Heart right ventricle (tissue), 16 donors: ENCODE measurements at regions of chr1 and their contacts with region 1.

Region 1: GRCh38 chr1:2133039-2133878 is 61.3 kb downstream of the FAAP20 start:
- DNase-seq: peak; percentile 98 to 99
- ATAC-seq: peak; percentile 92 to 95 (median 94)
- H3K4me3 ChIP-seq: peak overlapping the region in 9 of 10 donors; percentile 21 to 60 (median 46)
- H3K27ac ChIP-seq: peak overlapping the region; percentile 52 to 96 (median 88)
- H3K4me1 ChIP-seq: peaks cover 8 to 44% (median 25%) of the 10 kb centered on the region in 9 donors
- H3K27me3 ChIP-seq: no peaks in the 10 kb centered on the region
- CTCF ChIP-seq: no peak

Region 2: GRCh38 chr1:2174348-2175054 is 41.2 kb after region 1 on chr1:
- intact Hi-C with region 1: loop called in 5 of 10 experiments (anchors 1 to 5 kb)
- DNase-seq: peak in 1 of 2 donors; percentile 65
- ATAC-seq: peak; percentile 68 to 87 (median 76)
- H3K4me3 ChIP-seq: peak overlapping the region in 9 of 10 donors; percentile 25 to 57 (median 44)
- H3K27ac ChIP-seq: peak overlapping the region in 2 of 10 donors; percentile 26 to 36
- H3K4me1 ChIP-seq: peaks cover 0 to 14% (median 5%) of the 10 kb centered on the region in 9 donors
- H3K27me3 ChIP-seq: no peaks in the 10 kb centered on the region
- CTCF ChIP-seq: peak; percentile 67 to 95 (median 91)

Region 3: GRCh38 chr1:2189459-2190425 is 56.5 kb after region 1 on chr1:
- intact Hi-C with region 1: loop called in 1 of 10 experiments (anchors 10 kb)
- DNase-seq: peak; percentile 95 to 97
- ATAC-seq: peak; percentile 86 to 95 (median 94)
- H3K4me3 ChIP-seq: peak overlapping the region; percentile 22 to 74 (median 62)
- H3K27ac ChIP-seq: peak overlapping the region; percentile 90 to 99 (median 94)
- H3K4me1 ChIP-seq: peaks cover 19 to 51% (median 41%) of the 10 kb centered on the region in 9 donors
- H3K27me3 ChIP-seq: no peaks in the 10 kb centered on the region
- CTCF ChIP-seq: peak in 1 of 9 donors; percentile 9

Region 4: DNA sequence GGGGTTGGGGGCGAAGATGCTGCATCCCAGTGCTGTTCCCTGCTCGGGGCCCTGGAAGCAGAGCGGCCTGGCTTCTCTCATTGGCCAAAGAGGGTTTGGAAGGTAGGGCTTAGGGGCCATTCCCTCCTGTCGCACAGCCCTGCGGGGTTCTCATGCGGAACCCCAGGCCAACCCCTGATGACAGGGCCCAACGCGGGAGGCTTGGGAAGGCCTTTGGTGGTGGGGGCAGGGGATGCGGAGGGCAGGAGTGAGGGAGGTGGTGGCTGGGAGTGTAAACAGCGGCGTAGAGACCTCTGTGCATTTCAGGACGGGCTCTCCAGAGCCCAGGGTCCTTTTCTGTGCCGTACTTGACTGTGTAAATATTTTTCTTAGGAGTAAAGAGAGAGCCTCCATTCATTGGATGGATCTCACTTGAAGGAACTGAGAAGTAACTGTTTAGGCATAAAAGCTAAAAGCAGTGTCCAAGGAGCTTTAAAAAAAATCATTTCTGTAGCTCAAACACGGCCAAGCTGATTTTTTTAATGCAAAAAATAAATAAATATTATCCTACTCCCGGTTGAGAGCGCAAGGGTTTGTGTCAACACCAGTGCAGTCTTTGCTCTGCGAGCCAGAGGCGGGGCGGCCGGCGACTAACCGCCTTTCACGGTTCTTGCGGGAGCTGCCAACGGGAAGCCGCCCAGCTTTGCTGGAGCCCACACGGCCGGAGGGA is 1104.9 kb after region 1 on chr1:
- intact Hi-C with region 1: no loop called
- DNase-seq: no peak
- ATAC-seq: no peak
- H3K4me3 ChIP-seq: no peak overlapping the region
- H3K27ac ChIP-seq: no peak overlapping the region
- H3K4me1 ChIP-seq: no peaks in the 10 kb centered on the region
- H3K27me3 ChIP-seq: peaks cover 0 to 7% (median 0%) of the 10 kb centered on the region in 7 donors
- CTCF ChIP-seq: no peak